HAP-1 (cell line): ENCODE measurements at regions of chr9 and their contacts with region 1.

Region 1: DNA sequence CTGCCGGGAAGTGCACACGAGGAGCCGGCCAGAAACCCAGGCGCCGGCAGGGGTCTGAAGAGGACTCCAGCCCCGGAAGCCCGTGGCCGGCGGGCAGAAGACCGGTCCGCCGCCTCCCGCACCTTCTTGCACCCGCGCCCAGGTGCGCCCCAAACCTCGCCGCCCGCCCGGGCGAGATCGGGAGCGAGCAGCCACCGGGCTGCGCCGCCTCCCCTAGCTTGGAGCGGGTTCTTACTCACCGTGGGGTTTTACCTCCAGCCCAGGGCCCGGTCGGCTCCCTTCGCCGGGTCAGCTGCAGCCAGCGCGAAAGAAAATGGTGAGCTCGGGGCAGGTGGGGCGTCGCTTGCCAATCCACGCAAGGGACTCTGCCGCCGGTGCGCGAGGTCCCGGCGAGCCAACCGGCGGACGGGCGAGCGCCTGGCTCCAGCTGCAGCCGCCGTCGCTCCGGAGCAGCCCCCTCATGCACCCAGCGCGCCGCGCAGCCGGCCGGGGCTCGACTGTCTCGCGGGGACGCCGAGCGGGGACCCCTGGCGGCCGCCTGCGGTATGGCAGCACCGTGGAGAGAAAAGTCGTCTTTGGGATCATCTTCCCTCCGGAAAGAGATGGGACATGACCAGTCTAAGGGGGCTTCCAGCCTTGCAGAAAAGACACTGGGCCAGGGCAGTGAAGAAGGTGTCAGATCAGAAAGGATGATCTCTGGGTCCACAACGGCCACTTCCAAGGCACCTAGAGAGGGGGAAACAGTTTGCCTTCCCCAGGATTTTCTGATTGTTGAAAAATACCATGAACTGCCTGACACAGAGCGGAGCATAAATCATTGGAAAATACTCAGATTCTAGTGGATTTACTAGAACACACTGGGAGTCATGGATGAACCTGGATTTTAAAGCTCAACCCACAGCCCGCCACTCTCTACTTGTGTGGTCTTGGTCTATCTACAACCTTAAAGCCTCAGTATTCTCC is at the start of gene MOB3B:
- DNase-seq: peak; percentile 64 to 92
- H3K4me3 ChIP-seq: peak within 1 kb of the TSS; percentile 72
- H3K4me1 ChIP-seq: peaks cover 17% of the 10 kb centered on the region
- H3K27me3 ChIP-seq: no peaks in the 10 kb centered on the region

Region 2: GRCh38 chr9:27033823-27034403 is 495.7 kb before region 1 on chr9:
- in situ Hi-C with region 1: loop called (anchors 25 kb)
- DNase-seq: peak; percentile 46 to 81
- H3K4me3 ChIP-seq: no peak overlapping the region
- H3K4me1 ChIP-seq: no peaks in the 10 kb centered on the region
- H3K27me3 ChIP-seq: no peaks in the 10 kb centered on the region

Region 3: DNA sequence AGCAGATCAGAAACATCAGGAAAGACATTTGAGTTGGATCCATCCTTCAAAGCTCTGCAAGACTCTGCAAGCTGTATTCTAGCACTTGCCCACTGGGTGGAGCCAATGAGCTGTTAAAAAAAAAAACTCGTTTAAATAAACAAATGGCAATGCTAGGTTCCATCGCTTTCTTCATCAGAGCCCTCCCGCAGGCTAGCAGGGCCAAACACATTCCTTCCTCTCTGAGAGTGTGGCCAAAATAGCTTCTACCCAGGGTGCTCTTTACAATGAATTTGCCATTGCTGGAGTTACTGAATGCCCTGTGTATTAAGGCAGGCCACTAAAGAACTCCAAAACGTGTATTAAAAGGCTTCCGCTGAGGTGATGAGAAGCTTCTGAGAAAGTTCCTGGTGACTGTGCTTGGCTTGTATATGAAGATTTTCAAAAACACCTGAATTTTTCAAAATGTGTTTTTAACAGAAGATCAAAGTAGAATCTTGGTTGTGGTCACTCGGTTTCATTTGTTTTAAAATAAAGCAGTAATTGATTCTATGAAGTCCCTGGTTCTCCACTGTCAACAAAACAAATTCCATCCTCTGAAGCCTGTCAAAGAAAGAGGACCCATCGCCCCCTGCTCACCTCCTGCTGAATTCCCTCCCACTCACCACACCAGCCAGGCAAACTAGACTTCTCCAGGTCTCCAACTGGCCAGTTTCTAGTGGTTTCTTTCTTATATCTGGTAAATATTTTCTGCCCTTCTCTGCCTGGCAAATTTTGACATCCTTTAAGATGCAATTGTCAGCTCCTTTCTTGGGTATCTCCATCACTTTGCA is 196.2 kb before region 1 on chr9:
- in situ Hi-C with region 1: loop called (anchors 5 kb)
- DNase-seq: peak; percentile 76 to 77
- H3K4me3 ChIP-seq: no peak overlapping the region
- H3K4me1 ChIP-seq: peaks cover 4% of the 10 kb centered on the region
- H3K27me3 ChIP-seq: no peaks in the 10 kb centered on the region